ENCODE measurements at regions of chr17 and their contacts with region 1.

Region 1: GRCh38 chr17:43338886-43339516 is 59.8 kb upstream of the ARL4D start:
- DNase-seq: peak; percentile 81
- ATAC-seq: no peak
- H3K4me3 Mint-ChIP-seq: no peak overlapping the region
- H3K27ac Mint-ChIP-seq: no peak overlapping the region
- H3K4me1 Mint-ChIP-seq: peaks cover 38% of the 10 kb centered on the region
- H3K27me3 Mint-ChIP-seq: no peaks in the 10 kb centered on the region

Region 2: DNA sequence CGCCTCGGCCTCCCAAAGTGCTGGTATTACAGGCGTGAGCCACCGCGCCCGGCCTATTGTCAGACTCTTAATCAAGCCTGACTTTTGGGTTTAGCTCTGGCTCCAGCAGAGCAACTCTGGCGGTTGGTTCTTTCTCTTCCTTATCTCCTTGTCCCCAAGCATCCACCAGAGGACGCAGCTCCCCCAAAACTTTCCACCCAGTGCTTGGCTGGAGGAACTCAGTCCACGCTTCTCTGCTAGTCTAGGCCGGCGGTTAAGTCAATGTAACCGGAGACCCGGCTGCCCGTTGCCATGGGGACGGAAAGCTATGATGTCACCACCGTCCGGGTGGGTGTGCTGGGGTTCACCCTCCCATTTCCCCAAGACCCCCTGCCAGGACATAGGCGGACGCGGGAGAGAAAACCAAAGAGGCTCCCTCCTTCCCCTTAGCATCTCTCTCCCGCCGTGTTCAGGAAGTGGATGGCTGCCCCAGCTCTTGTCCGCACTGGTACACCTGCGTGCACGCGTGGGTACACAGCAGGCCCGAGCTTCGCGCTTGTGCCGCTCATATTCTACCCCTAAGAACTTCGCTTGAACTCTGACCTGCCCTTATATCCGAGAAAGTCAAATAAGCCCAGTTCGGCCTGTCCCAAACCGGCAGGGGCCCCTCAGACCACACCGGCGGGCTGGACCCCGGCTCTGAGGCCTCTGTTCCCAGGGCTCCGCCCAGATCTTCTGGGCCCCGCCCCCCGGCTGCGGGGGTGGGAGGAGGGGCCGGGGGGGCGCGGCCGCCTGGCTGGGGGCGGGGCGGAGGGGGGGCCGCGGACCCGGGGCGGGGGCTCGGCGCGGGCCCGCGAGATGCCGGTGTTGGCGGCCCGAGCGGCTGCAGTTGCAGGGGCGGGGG is 314.4 kb before region 1 on chr17 and contains the start of gene RND2:
- CTCF ChIA-PET with region 1: no interaction called
- POLR2A ChIA-PET with region 1: no interaction called
- intact Hi-C with region 1: loop called in 1 of 2 experiments (anchors 5 kb)
- DNase-seq: peak; percentile 89
- ATAC-seq: peak; percentile 68
- H3K4me3 Mint-ChIP-seq: peak within 1 kb of the TSS; percentile 78
- H3K27ac Mint-ChIP-seq: peak within 1 kb of the TSS; percentile 71
- H3K4me1 Mint-ChIP-seq: peaks cover 26% of the 10 kb centered on the region
- H3K27me3 Mint-ChIP-seq: no peaks in the 10 kb centered on the region
- total RNA-seq, gene RND2: 0.05 to 0.16 TPM

Region 3: GRCh38 chr17:43360739-43361505 is 21.9 kb after region 1 on chr17:
- CTCF ChIA-PET with region 1: interaction called, 8 read pairs
- POLR2A ChIA-PET with region 1: interaction called, 56 read pairs
- intact Hi-C with region 1: loop called (anchors 1 kb)
- DNase-seq: peak; percentile 86
- ATAC-seq: peak; percentile 87
- H3K4me3 Mint-ChIP-seq: peak overlapping the region; percentile 90
- H3K27ac Mint-ChIP-seq: peak overlapping the region; percentile 100
- H3K4me1 Mint-ChIP-seq: peaks cover 31% of the 10 kb centered on the region
- H3K27me3 Mint-ChIP-seq: peaks cover 4% of the 10 kb centered on the region

Region 4: GRCh38 chr17:43388359-43389045 is 49.5 kb after region 1 on chr17:
- CTCF ChIA-PET with region 1: interaction called, 10 read pairs
- POLR2A ChIA-PET with region 1: interaction called, 9 read pairs
- intact Hi-C with region 1: loop called in 1 of 2 experiments (anchors 1 kb)
- DNase-seq: peak; percentile 95
- ATAC-seq: peak; percentile 82
- H3K4me3 Mint-ChIP-seq: peak overlapping the region; percentile 80
- H3K27ac Mint-ChIP-seq: peak overlapping the region; percentile 98
- H3K4me1 Mint-ChIP-seq: peaks cover 16% of the 10 kb centered on the region
- H3K27me3 Mint-ChIP-seq: no peaks in the 10 kb centered on the region

Region 5: DNA sequence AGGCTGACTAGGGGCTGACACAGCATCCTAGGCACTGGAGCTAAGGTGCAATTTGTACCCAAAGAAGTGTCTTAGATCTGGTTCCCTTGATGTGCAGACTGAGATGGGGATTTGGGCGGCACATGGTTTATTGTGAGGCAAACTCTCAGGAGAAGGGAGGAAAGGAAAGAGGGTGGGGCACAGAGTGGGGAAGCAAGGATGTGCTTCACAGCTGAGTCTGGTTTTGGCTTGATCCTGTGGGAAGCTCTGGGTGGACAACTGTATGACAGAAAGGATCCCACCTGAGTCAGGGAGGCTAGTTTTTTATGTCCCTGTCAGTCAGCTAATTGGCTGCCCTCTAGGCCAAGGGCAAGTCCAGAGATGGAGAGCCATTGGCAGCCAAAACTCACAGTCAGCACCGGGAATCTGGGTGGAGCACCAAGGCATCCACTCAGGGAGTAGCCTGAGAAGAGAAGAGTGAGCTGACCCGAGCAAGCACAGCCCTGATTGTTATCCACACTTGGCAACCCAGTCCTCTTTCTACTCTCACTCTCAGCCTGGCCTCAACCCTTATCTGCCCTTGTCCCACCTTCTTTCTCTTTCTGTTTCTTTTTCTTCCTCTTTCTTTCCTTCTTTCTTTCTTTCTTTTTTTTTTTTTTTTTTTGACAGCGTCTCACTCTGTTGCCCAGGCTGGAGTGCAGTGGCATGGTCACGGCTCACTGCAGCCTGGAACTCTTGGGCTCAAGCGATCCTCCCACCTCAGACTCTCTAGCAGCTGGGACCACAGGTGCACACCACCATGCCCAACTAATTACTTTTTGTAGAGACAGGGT is 71.8 kb after region 1 on chr17:
- CTCF ChIA-PET with region 1: no interaction called
- POLR2A ChIA-PET with region 1: no interaction called
- intact Hi-C with region 1: no loop called
- DNase-seq: no peak
- ATAC-seq: no peak
- H3K4me3 Mint-ChIP-seq: no peak overlapping the region
- H3K27ac Mint-ChIP-seq: no peak overlapping the region
- H3K4me1 Mint-ChIP-seq: no peaks in the 10 kb centered on the region
- H3K27me3 Mint-ChIP-seq: peaks cover 9% of the 10 kb centered on the region

Region 6: DNA sequence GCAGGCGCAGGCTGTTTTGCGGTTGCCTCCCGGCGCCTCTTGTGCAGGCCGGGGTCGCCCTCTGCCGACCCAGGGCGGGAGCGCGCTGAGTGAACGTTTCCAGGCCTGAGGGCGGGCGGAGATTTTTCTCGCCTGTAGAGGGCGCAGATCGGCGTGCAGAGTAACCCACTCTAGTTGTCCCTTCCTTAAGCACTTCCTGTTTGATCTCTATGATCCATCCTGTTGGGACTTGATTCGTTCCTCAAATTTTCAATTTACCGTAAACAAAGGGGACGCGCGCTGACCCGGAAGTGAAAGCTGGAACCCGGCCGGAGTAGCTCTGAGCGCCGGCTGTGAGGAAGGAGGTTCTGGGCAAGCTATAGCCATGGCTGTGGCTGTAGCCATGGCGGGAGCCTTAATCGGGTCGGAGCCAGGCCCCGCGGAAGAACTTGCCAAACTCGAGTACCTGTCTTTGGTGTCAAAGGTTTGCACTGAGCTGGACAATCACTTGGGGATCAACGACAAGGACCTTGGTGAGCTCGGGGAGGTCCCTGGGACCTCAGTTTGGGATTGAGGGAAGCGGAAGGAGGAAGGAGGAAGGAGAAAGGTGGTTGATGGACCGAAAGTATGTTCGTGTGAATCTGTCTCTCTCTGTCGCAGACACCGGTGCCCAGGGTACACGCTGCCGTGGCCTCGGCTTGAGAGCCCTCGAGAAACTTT is 144.8 kb after region 1 on chr17 and contains the start of gene DHX8:
- CTCF ChIA-PET with region 1: interaction called, 8 read pairs
- POLR2A ChIA-PET with region 1: no interaction called
- intact Hi-C with region 1: loop called (anchors 2 to 5 kb)
- DNase-seq: peak; percentile 99
- ATAC-seq: peak; percentile 94
- H3K4me3 Mint-ChIP-seq: peak within 1 kb of the TSS; percentile 100
- H3K27ac Mint-ChIP-seq: peak within 1 kb of the TSS; percentile 99
- H3K4me1 Mint-ChIP-seq: peaks cover 19% of the 10 kb centered on the region
- H3K27me3 Mint-ChIP-seq: no peaks in the 10 kb centered on the region
- total RNA-seq, gene DHX8: 42.6 to 46.9 TPM